ENCODE measurements at regions of chr18 and their contacts with region 1.

Region 1: GRCh38 chr18:32317651-32318050 is 127.8 kb downstream of the MEP1B start:
- DNase-seq: peak; percentile 16
- H3K4me3 Mint-ChIP-seq: peak overlapping the region; percentile 8
- H3K27ac Mint-ChIP-seq: peak overlapping the region; percentile 68
- H3K4me1 Mint-ChIP-seq: peaks cover 13% of the 10 kb centered on the region
- H3K27me3 Mint-ChIP-seq: no peaks in the 10 kb centered on the region
- CTCF ChIP-seq: no peak

Region 2: DNA sequence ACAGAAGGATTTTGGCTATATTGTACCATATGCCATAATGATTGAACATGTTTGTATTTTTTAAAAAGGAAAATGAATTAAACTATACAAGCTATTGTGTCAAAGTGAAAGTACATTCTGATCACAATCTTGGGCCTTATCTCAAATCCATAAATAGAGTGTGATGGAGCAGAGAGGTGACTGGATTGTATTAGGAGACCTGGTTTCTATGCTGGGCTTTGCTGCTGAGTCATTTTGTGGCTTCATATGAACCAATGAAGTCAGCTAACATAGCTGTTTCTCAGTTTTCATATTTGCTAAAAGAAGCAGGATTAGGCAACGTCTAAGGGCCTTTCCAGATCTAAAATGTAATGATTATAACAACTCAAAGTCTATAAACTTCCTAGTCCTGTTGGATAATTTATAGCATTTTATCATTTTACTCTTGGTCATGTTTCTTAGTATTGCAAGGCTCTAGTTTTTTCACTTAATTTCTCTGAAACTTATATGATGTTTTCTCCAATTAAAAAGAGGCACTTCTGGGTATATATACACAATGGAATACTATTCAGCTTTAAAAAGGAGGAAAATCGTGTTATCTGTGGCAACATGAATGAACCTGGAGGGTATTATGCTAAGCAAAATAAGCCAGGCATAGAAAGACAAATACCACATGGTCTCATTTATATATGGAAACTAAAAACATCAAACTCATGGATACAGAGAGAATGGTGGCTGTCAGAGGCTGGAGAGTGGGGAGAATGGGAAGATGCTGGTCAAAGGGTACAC is 15.5 kb before region 1 on chr18:
- CTCF ChIA-PET with region 1: interaction called, 3 read pairs
- POLR2A ChIA-PET with region 1: interaction called, 20 read pairs
- intact Hi-C with region 1: no loop called
- DNase-seq: peak; percentile 77
- H3K4me3 Mint-ChIP-seq: no peak overlapping the region
- H3K27ac Mint-ChIP-seq: peak overlapping the region; percentile 78
- H3K4me1 Mint-ChIP-seq: peaks cover 32% of the 10 kb centered on the region
- H3K27me3 Mint-ChIP-seq: no peaks in the 10 kb centered on the region
- CTCF ChIP-seq: no peak

Region 3: GRCh38 chr18:32349728-32350395 is 32.2 kb after region 1 on chr18:
- CTCF ChIA-PET with region 1: interaction called, 5 read pairs
- POLR2A ChIA-PET with region 1: interaction called, 18 read pairs
- intact Hi-C with region 1: loop called (anchors 1 kb)
- DNase-seq: peak; percentile 94
- H3K4me3 Mint-ChIP-seq: peak overlapping the region; percentile 67
- H3K27ac Mint-ChIP-seq: peak overlapping the region; percentile 94
- H3K4me1 Mint-ChIP-seq: peaks cover 28% of the 10 kb centered on the region
- H3K27me3 Mint-ChIP-seq: no peaks in the 10 kb centered on the region
- CTCF ChIP-seq: no peak

Measured in MCF 10A (cell line).